Uterus (tissue), 4 donors: ENCODE measurements at regions of chr17 and their contacts with region 1.

Region 1: DNA sequence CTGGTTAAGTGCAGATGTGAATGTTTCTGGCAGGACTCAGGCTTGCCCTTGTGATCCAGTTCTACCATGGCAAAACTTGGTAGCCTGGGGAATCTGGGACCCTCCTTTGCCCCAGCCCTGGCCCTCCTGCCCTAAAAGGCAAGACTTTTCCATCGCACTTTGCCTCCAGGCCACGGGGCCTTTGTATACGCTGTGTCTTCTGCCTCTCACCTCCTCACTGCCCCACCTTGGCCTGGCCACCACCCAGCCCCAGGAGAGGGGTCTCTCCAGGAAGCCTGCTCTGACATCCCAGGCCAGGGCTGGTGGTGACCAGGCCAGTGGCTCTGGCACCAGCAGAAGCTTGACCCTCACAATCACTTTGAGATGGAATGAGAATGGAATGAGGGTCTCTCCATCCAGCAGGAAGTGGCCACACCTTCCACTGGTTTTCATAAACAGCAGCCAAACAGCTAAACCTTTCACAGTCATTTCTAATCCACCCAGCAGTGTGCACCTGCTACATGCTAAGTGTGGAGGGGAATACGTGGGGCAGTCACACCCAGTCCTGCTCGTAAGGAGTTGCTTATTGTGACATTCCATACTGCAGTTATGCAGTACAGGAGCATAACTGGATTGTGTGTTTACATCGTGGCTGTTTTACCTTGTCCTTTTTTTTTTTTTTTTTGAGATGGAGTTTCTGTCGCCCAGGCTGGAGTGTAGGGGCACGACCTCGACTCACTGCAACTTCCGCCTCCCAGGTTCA is 1.6 kb upstream of the MRPL38 start:
- DNase-seq: no peak
- H3K4me3 ChIP-seq: no peak overlapping the region
- H3K27ac ChIP-seq: peak overlapping the region in 1 of 2 donors; percentile 93
- H3K4me1 ChIP-seq: peaks cover 4 to 7% of the 10 kb centered on the region in 2 donors
- H3K27me3 ChIP-seq: no peaks in the 10 kb centered on the region
- CTCF ChIP-seq: no peak
- POLR2A ChIP-seq: no peak

Region 2: GRCh38 chr17:75827252-75828115 is 78.8 kb before region 1 on chr17:
- intact Hi-C with region 1: no loop called
- DNase-seq: peak; percentile 72 to 82
- H3K4me3 ChIP-seq: peak overlapping the region; percentile 29 to 32
- H3K27ac ChIP-seq: peak overlapping the region; percentile 81 to 82
- H3K4me1 ChIP-seq: peaks cover 0 to under 1% of the 10 kb centered on the region in 2 donors
- H3K27me3 ChIP-seq: no peaks in the 10 kb centered on the region
- CTCF ChIP-seq: peak; percentile 55 to 79 (median 72)
- POLR2A ChIP-seq: peak in 1 of 2 donors; percentile 11

Region 3: DNA sequence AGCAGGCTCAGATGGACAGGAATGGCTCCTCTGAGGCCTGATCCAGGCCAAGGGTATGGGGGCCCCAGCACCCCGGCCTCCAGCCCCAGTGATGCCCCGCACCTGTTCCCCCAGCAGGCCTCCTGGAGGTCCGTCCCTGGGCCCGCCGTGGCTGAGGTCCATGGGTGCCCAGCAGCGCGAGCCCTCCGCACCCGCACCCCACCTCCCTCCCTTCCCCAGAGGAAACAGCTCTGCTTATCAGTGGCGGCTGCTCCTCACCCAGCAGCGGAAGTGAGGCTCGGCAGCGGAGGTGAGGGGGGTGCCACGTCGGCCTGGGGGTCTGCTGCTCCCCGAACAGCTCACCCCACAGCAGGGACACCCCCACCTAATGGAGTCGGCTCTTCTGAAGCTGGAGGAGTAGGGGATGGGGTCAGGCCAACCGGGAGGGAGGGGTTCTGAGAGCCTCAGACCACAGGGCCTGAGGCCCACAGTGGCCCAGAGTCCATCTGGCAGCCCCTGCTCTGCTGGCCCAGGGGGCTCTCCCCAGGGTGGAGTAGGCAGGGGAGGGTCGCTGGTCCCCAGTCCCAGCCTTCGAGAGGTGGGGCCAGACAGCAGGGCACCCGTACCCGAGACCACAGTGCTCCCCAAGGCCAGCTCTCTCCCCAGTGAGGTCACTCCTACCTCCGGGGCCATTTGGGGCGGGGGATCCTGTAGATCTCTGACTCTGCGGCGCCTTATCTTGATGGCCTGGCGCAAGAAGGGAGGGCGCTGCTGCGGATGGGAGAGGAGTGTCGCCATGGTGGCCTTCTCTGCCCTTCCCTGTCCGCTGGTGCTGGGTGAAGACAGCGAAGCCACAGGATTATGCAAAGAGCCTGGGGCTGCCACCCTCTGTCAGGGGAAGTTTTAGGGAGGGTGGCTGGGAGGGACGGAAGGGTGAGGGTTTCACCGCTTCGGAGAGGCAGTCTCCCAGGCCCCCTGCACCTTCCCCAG is 62.5 kb before region 1 on chr17 and contains the start of gene UNC13D:
- intact Hi-C with region 1: no loop called
- DNase-seq: no peak
- H3K4me3 ChIP-seq: no peak within 1 kb of the TSS
- H3K27ac ChIP-seq: peak within 1 kb of the TSS; percentile 47 to 48
- H3K4me1 ChIP-seq: peaks cover 4 to 14% of the 10 kb centered on the region in 2 donors
- H3K27me3 ChIP-seq: no peaks in the 10 kb centered on the region
- CTCF ChIP-seq: no peak
- POLR2A ChIP-seq: no peak
- total RNA-seq, gene UNC13D: 1.2 to 32.7 (median 11.8) TPM

Region 4: DNA sequence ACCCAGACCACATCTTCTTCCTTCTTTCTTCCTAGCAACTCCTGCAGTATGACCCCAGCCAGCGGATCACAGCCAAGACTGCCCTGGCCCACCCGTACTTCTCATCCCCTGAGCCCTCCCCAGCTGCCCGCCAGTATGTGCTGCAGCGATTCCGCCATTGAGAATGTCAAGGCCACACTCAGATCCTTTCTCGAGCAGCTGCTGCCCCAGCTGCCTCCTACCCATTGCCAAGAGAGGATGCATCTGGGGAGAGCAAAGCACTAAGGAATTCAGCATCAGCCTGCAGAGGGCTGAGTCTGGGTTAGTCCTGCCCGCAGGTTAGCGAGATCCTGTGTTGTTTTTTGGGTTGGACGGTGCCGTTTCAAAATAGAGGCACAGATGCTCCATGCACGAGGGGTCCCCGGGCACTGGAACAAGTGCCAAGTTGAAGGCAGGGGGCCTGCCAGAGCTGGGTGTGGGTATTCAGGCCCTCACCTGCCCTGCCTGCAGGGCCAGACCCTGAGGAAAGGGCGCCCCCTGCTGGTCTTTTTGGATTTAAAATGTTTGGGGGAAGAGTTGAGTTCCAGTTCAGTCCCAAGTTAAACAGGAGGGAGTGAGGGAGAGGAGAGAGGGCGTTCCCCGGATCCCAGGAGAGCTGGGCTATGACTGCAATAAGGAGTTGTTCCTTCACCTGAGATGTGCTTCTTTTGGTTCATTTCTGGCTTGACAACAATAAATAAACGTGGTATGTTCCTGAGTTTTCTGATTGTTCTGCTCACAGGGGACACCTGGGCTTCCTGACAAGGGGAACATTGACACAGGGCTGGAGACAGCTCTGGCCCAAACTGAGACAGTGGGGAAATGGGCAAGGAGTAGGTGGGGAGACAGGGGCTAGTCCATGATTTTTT is 99.2 kb after region 1 on chr17:
- intact Hi-C with region 1: loop called (anchors 2 kb)
- DNase-seq: peak; percentile 79 to 82
- H3K4me3 ChIP-seq: no peak overlapping the region
- H3K27ac ChIP-seq: peak overlapping the region; percentile 52 to 55
- H3K4me1 ChIP-seq: no peaks in the 10 kb centered on the region
- H3K27me3 ChIP-seq: no peaks in the 10 kb centered on the region
- CTCF ChIP-seq: peak; percentile 67 to 76 (median 70)
- POLR2A ChIP-seq: no peak